ENCODE measurements at regions of chr2 and their contacts with region 1.

Region 1: GRCh38 chr2:219294356-219295351 is 14.5 kb downstream of the PTPRN start:
- DNase-seq: peak; percentile 36
- H3K4me3 ChIP-seq: peak overlapping the region; percentile 56
- H3K27ac ChIP-seq: peak overlapping the region; percentile 21
- H3K27me3 ChIP-seq: no peaks in the 10 kb centered on the region
- CTCF ChIP-seq: peak; percentile 89

Region 2: DNA sequence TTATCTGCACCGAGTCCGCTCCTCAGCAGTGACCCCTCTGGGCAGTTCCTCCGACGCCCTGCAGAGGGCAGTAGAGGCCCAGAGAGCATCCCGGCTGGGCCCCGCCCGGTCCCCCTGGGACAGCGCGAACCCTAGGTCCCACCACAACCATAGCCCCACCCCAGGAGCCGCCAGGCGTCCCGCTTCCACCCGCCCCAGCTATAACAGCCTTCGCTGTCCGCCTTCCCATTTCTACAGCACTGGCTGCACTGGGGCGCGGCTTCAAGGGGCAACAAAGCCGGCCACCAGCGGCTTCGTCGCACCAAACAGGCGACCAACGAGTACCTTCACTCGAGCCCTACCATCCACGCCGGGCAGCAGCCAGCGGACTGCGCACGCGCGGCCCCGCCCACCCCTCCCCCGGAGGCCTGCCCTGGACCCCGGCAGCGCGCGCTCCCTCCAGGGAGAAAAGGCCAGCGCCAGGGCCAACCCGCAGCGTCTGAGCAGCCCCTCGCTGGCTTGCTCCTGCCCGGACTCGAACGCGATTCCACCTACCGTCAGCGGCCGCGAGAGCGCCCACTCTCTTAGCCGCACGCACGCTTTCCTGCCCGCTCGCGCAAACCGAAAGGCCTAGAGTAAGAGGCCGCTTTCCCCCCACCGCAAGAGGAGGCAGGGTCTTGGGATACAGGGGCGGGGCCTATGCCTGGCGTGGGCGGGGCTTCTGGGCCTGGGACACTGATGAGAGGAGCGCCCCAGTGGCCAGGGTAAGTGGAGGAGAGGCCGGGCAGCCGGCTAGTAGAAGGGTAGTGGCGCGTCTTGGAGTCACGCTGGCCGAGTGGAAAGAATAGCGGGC is 134.3 kb before region 1 on chr2 and contains the start of gene NHEJ1:
- CTCF ChIA-PET with region 1: interaction called, 131 read pairs
- POLR2A ChIA-PET with region 1: no interaction called
- DNase-seq: peak; percentile 82
- H3K4me3 ChIP-seq: peak within 1 kb of the TSS; percentile 89
- H3K27ac ChIP-seq: peak within 1 kb of the TSS; percentile 90
- H3K27me3 ChIP-seq: no peaks in the 10 kb centered on the region
- CTCF ChIP-seq: peak; percentile 98
- polyA plus RNA-seq, gene NHEJ1: 21.9 and 22.9 TPM in 2 replicates

Region 3: DNA sequence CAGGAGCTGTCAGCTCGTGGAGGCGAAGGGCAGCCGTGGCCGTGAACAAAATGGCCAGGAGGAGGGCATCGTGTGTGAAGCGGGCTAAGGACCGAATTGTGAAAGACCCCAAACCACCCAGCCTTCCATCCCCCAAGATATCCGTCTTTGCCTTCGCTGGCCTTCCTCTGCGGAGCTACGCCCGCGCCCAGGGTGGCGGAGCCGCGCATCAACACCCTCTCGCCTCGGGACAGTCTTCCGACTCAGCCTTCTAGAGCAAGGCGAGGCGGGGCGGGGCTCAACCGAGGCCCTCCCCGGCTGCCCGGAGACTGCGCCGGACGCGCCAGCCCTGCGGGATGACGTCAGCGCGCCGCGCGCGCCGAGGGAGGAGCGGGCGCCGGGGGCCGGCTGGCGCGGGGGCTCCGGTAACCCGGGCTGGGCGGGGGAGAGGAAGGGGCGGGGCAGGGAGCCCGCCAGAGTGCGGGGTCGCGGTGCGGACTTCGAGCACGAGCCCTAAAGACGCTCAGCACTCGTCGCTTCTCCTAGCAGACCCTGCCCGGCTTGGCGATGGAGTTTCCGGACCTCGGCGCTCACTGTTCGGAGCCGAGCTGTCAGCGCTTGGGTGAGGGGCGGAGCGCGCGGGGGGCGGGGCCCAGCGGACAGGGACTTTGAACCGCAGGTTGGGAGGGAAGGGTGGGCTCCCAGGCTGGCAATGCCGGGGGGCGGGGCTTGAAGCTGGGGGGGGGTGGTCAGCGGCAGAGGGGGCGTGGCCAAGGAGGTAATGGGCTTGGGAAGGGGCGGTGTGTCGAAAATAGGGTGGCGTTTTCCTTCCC is 88.0 kb before region 1 on chr2 and contains the start of gene ZFAND2B:
- CTCF ChIA-PET with region 1: interaction called, 22 read pairs
- POLR2A ChIA-PET with region 1: no interaction called
- DNase-seq: peak; percentile 69
- H3K4me3 ChIP-seq: peak within 1 kb of the TSS; percentile 83
- H3K27ac ChIP-seq: peak within 1 kb of the TSS; percentile 78
- H3K27me3 ChIP-seq: no peaks in the 10 kb centered on the region
- CTCF ChIP-seq: no peak; the same call in 1 of the 2 replicates
- polyA plus RNA-seq, gene ZFAND2B: 24.5 and 29.6 TPM in 2 replicates

Region 4: DNA sequence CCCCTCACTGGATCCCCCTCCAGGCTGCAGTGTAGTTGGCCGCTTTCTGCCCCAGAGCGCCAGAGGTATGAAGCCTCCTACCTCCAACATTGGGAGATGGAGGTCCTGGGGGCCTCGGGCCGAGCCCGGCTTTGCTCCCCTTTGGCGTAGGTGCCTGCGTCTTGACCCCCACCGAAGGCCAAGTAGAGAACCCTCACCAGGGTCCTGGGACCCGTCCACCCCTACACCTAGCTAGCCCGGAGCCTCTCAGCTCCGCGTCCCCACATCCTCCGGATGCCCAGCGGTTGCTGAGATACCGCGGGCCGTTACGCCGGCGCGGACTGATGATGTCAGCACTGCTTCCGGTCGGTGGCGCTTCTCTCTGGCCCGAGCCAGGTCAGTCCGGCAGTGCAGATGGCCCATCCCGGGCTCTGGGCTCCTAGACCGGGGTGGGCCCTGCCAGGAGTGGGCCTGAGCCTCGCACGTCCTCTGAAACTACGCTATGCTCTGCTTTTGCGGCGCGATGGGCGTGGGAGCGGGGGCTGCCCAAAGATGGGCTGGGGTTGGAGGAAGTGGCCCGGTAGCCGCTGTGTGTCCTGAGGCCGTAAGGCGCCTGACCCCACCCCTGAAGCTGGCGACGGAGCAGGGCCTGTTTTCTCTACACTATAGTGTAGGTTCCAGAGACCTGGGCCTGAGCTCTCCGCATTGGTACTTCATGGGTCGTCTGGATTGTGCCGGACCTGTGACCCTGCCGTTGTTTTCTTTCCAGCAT is 49.3 kb before region 1 on chr2 and contains the starts of genes GLB1L and STK16:
- CTCF ChIA-PET with region 1: interaction called, 24 read pairs
- POLR2A ChIA-PET with region 1: interaction called, 4 read pairs
- DNase-seq: peak; percentile 80
- H3K4me3 ChIP-seq: peak within 1 kb of the TSS; percentile 97
- H3K27ac ChIP-seq: peak within 1 kb of the TSS; percentile 70
- H3K27me3 ChIP-seq: no peaks in the 10 kb centered on the region
- CTCF ChIP-seq: 0 out of 2 replicates have a peak, but pooled peaks have one; percentile 4
- polyA plus RNA-seq, gene GLB1L: 8.8 and 9.6 TPM in 2 replicates
- polyA plus RNA-seq, gene STK16: 33.9 and 36.6 TPM in 2 replicates

Region 5: DNA sequence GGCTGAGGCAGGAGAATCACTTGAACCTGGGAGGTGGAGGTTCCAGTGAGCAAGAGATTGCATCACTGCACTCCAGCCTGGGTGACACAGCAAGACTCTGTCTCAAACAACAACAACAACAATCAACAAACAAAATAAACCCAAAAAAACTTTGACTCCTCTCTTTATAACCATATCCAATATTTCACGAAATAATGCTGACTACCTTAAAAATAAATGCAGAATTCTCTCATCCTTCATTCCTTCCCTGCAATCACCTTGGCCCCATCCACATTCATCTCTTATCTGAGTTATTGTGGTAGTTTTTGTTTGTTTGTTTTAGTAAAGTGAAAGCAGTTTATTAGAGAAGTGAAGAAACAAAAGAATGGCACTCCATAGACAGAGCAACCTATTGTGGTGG is 11.4 kb after region 1 on chr2:
- CTCF ChIA-PET with region 1: interaction called, 16 read pairs
- POLR2A ChIA-PET with region 1: no interaction called
- DNase-seq: no peak
- H3K4me3 ChIP-seq: no peak overlapping the region
- H3K27ac ChIP-seq: no peak overlapping the region
- H3K27me3 ChIP-seq: no peaks in the 10 kb centered on the region
- CTCF ChIP-seq: no peak

Region 6: DNA sequence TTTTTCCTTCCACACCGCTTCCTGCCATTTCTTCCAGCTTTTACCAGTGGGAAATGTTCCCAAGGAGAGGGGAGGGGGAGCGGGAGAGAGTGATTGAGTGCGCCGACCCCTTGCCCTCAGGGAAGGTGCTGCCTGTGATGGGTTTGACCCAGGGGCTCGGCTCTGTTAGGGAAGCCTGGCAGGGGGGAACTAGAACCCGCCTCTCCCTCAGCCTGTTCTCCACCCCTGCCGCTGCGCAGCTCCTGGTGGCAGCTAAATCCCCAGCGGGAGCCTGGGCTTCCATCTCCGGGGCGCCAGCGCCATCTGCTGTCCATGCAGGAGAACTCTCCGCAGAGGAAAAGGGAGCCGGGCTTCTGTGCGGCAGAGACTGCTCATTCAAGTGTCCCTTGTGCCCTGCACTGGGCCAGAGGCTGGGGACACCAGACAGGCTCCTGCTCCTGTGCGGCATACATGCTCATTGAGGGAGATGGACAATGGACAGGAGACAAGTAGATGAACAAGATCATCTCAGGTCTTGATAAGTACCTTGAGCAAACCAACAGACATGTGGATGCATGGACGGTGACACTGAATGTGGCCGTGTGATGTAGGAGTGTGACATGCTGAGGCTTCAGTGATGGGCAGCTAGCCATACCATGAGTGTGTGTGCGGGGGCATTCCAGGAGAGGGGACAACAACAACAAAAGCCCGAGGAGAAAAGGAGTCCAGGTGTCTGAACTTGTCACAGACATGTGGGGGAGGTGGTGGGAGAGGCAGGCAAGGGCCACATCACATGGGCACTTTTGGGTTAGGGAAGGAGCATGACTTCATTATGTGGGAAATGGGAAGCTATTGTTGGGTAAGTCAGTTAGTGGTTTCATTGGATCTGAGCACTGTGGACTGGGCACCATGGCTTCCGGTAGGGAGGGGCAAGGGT is 235.7 kb after region 1 on chr2:
- CTCF ChIA-PET with region 1: interaction called, 13 read pairs
- POLR2A ChIA-PET with region 1: no interaction called
- DNase-seq: peak; percentile 59
- H3K4me3 ChIP-seq: peak overlapping the region; percentile 41
- H3K27ac ChIP-seq: no peak overlapping the region
- H3K27me3 ChIP-seq: peaks cover 45% of the 10 kb centered on the region
- CTCF ChIP-seq: peak; percentile 98

Region 7: GRCh38 chr2:219664944-219665343 is 370.3 kb after region 1 on chr2:
- CTCF ChIA-PET with region 1: no interaction called
- POLR2A ChIA-PET with region 1: no interaction called
- DNase-seq: no peak
- H3K4me3 ChIP-seq: no peak overlapping the region
- H3K27ac ChIP-seq: no peak overlapping the region
- H3K27me3 ChIP-seq: peaks cover 22% of the 10 kb centered on the region
- CTCF ChIP-seq: no peak

Measured in AG04450 (cell line).